Activated CD4-positive, alpha-beta T cell treated with anti-CD3 and anti-CD28 coated beads, Interleukin-2, amount 10 ng/mL, durations not matched to agents 24 days and 14 days (primary cell): ENCODE measurements at regions of chr3 and their contacts with region 1.

Region 1: DNA sequence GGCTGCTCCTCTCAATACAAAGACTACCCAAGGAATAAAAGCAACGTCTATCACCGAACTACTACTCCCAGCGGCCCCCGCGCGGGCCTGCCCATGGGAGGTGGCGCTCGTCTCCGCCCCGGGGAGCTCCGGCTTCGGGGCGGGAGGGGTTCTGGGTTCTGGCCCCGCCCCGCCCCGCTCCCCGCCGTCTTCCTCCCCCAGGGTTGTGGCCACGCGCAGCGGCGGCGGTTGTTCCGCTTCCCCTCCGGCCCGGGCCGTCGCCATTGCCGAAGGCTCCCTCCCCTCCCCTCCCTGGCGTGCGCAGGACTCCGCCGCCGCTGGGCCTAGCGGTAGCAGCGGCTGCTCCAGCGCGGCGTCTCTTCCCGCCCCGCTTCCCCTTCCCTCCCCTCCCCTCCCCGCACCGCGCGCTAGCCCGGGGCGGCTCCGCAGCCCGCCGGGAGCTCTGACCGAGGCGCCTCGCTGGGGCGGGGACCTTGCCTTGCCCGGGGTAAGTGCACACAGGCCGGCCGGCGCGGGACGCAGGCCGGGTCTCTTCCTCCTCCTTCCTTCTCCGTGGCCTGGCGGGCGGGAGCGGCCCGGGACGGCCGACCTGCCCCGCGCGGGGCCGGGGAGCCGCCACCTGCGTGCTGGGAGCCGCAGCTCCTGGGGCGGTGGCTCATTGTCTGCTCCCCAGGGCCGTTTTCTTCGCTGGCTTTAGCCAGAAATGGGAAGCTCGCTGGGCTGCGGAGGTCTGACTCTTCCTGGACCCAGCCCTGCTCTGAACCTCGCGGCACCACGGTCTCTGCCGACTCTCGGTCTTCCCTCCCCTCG is at the start of gene PAK2:
- DNase-seq: peak; percentile 97
- H3K4me3 Mint-ChIP-seq: peak within 1 kb of the TSS; percentile 96
- H3K27ac Mint-ChIP-seq: peak within 1 kb of the TSS; percentile 98
- H3K4me1 Mint-ChIP-seq: peaks cover 22% of the 10 kb centered on the region
- H3K27me3 Mint-ChIP-seq: no peaks in the 10 kb centered on the region
- total RNA-seq, gene PAK2: 81.1 and 92.5 TPM in 2 replicates

Region 2: DNA sequence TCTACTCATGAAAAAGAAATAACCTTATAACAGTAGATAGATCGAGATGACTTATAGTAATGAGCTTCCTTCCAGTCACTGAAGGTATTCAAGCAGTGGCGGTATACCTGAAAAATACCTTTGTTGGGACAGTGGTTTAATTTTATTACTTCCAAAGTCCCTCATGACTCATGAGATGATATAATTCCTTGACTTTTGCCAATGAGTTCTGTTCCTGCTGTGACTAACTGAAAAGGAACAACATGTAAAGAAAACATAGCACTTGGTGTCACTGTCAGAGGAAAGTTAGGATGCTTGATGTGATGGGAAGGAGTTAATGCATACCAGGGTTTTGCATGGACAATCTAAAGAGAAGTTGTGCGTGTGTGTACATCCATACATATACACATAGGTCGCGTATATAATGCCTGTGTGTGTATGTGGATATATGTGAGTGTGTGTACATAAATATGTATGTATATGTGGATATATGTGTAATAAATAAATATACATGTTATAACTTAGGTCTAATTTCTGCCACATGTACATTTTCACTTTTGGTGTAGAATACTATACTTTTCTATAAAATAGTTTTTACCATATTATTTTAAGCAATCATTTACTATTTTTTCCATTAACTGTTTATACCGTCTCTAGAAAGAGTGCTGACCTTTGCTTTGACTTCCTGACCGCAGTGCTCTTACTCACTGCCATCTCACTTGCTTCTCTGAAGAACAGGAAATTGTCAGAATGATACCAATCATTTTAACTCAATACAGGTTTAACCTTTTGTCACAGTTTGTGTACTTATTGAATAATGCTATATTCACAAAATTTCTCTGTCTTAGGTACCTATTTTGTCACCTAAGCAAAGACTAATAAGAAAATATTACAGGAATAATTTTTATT is 12.8 kb before region 1 on chr3:
- intact Hi-C with region 1: loop called (anchors 1 kb)
- DNase-seq: peak; percentile 67
- H3K4me3 Mint-ChIP-seq: peak overlapping the region; percentile 39
- H3K27ac Mint-ChIP-seq: peak overlapping the region; percentile 79
- H3K4me1 Mint-ChIP-seq: peaks cover 25% of the 10 kb centered on the region
- H3K27me3 Mint-ChIP-seq: no peaks in the 10 kb centered on the region

Region 3: DNA sequence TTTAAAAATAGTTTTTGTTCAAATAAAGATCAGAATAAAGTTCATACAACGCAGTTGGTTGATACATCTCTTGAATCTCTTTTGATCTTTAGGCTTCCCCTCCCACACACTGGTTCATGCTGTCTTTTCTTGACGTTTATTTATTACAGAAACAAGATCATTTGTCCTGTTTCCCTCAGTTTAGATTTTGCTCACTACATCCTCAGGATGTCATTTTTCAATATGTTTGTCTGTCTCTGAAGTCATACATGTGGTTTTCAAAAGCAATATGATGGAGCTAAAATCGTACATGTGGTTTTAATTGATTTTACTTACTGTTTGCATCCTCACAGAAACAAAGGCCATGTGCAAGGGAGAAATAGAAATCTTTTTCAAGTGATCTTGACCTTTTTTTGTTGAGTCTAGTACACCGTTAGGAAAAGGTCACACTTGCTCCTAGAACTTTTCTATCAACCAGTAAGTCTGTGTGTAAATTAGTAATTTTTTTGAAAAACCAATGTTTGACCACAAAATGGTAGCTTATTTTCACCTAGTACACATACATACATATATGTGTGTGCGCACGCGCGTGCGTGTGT is 64.1 kb after region 1 on chr3:
- intact Hi-C with region 1: loop called (anchors 5 kb)
- DNase-seq: no peak
- H3K4me3 Mint-ChIP-seq: peak overlapping the region; percentile 20
- H3K27ac Mint-ChIP-seq: peak overlapping the region; percentile 84
- H3K4me1 Mint-ChIP-seq: peaks cover 14% of the 10 kb centered on the region
- H3K27me3 Mint-ChIP-seq: no peaks in the 10 kb centered on the region

Region 4: DNA sequence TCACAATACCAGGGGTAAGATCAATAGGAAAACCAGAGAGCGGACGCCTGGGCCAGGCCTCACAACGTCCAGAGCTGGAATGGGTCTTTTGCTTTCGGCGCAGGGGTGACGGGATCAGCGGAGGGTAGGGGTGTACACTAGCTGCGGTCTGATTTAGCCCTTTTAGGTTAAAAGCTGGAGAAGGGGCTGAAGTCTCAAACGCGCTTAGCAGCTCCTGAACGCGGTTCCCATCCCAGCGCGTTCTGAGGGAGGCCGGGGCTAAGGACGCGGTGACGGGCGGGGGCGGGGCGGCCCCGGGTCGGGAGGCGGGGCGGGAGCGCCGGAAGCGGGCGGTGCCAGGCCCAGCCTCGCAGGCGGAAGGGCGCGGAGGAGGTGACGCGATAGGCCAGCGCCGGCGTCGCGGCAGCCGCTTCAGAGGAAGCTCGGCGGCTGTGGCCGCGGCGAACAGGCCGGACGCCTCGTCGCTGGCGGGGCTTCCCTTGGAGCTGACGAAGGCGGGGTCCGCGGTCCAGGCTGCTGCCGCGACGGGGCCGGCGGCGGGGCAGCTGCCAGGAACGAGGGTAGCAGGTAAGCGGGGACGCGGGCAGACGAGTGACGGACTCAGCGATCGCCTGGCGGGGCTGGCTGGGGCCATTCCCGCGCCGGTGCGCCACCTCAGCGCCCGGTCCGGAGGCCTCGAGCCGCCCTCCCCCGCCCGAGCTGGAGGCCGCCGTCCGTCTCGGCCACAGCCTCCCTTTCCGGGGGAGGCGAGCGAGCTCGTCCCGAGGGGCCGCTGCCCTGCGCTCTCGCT is 127.8 kb after region 1 on chr3 and contains the start of gene SENP5:
- intact Hi-C with region 1: loop called (anchors 1 kb)
- DNase-seq: peak; percentile 97
- H3K4me3 Mint-ChIP-seq: peak within 1 kb of the TSS; percentile 96
- H3K27ac Mint-ChIP-seq: peak within 1 kb of the TSS; percentile 93
- H3K4me1 Mint-ChIP-seq: peaks cover 17% of the 10 kb centered on the region
- H3K27me3 Mint-ChIP-seq: no peaks in the 10 kb centered on the region
- total RNA-seq, gene SENP5: 44.2 and 47.2 TPM in 2 replicates

Region 5: DNA sequence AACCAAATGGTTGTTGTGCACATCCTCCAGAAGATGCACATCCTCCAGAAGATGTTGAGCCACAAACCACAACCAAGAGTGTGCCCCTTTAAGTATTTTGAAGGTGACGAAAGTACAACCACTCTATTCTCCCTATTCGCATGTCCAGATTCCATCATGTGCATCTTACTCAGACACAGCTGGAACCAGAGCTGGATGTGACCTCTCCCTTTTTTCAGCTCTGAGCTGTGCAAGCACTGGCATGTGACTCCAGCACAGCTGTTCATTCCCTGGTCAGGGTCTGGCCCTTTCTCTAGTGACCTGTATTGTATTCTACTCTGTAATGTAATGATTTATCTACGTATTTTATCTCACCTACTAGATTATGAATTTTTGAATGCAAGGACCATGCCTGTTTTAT is 587.8 kb after region 1 on chr3:
- intact Hi-C with region 1: no loop called
- DNase-seq: no peak
- H3K4me3 Mint-ChIP-seq: no peak overlapping the region
- H3K27ac Mint-ChIP-seq: no peak overlapping the region
- H3K4me1 Mint-ChIP-seq: peaks cover 4% of the 10 kb centered on the region
- H3K27me3 Mint-ChIP-seq: peaks cover 19% of the 10 kb centered on the region